Dorsolateral prefrontal cortex (tissue), 120 donors: ENCODE measurements at regions of chr6 and their contacts with region 1.

Region 1: DNA sequence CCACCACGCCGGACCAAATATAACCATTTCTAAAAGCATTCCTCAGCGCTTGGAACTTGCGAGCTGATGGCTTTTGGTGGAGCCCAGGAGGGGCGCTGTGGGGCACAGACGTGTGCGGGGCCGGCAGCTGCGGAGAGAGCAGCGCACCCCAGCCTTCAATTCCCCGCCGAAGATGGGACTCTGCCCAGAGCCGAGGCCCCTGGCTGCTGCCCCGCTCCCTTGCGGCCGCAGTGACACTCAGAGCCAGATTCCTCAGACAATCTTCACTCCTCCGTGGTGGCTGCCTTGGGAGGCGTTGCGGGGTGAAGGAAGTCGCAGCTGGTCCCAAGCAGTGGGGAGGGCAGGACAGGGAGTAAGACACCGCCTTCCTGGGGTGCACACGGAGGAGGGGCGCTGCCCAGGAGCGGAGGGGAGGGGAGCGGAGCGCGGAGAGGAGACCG is 87.7 kb downstream of the TMEM242 start:
- DNase-seq: peak in 9 of 10 donors; percentile 38 to 79 (median 72)
- H3K4me3 ChIP-seq: peak overlapping the region; percentile 40 to 80 (median 64)
- H3K27ac ChIP-seq: peak overlapping the region in 56 of 59 donors; percentile 32 to 93 (median 82)
- H3K27me3 ChIP-seq: no peaks in the 10 kb centered on the region
- CTCF ChIP-seq: peak; percentile 20 to 75 (median 62)

Region 2: GRCh38 chr6:157274471-157275226 is 39.0 kb after region 1 on chr6:
- intact Hi-C with region 1: loop called (anchors 5 kb)
- DNase-seq: peak in 9 of 10 donors; percentile 44 to 87 (median 57)
- H3K4me3 ChIP-seq: peak overlapping the region; percentile 45 to 88 (median 72)
- H3K27ac ChIP-seq: peak overlapping the region in 58 of 59 donors; percentile 4 to 97 (median 86)
- H3K27me3 ChIP-seq: no peaks in the 10 kb centered on the region
- CTCF ChIP-seq: peak in 54 of 56 donors; percentile 22 to 94 (median 74)

Region 3: GRCh38 chr6:157339432-157339831 is 103.8 kb after region 1 on chr6:
- intact Hi-C with region 1: no loop called
- DNase-seq: no peak
- H3K4me3 ChIP-seq: no peak overlapping the region
- H3K27ac ChIP-seq: no peak overlapping the region
- H3K27me3 ChIP-seq: no peaks in the 10 kb centered on the region
- CTCF ChIP-seq: peak in 4 of 56 donors; percentile 10 to 26 (median 12)